Colonic mucosa (tissue), 4 donors: ENCODE measurements at regions of chr7 and their contacts with region 1.

Region 1: GRCh38 chr7:151459726-151460473 is 20.0 kb upstream of the CRYGN start:
- DNase-seq: peak; percentile 83
- H3K4me3 ChIP-seq: no peak overlapping the region
- H3K27ac ChIP-seq: peak overlapping the region; percentile 73
- H3K4me1 ChIP-seq: peaks cover 11% of the 10 kb centered on the region
- H3K27me3 ChIP-seq: no peaks in the 10 kb centered on the region
- CTCF ChIP-seq: no peak

Region 2: DNA sequence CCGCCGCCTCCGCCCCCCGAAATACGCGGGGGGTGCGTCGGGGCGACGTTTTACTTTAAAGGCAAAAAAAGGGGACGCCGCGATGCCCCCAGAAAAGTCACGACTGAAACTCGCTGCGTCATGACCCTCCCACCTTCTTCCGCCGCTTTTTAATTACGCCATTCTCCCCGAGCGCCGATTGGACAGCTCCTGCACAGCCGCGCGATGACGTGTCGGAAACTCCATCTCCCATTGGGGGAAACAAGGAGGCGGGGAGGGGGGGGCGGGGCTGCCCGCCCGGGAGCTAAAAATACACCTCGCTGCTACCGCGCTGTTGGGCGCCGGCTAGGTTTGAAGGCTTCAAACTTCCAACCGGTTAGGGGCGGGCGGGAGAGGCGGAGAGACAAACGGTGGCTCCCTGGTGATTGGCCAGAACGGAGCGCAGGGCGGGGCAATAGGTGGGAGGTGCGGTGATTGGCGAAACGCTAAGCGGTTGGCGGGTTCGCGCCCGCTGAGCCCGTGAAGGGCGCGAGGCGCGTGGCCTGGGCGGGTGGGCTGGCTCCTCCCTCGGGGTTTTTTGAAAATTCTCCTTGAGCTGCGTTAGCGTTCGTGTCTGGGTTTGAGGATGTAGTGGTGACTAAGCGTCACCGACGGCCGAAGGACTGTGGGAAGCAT is 60.0 kb after region 1 on chr7 and contains the start of gene RHEB:
- intact Hi-C with region 1: loop called (anchors 5 kb)
- DNase-seq: peak; percentile 99
- H3K4me3 ChIP-seq: peak within 1 kb of the TSS; percentile 70
- H3K27ac ChIP-seq: peak within 1 kb of the TSS; percentile 98
- H3K4me1 ChIP-seq: peaks cover 3% of the 10 kb centered on the region
- H3K27me3 ChIP-seq: no peaks in the 10 kb centered on the region
- CTCF ChIP-seq: no peak
- total RNA-seq, gene RHEB: 66.8 to 67.6 TPM

Region 3: DNA sequence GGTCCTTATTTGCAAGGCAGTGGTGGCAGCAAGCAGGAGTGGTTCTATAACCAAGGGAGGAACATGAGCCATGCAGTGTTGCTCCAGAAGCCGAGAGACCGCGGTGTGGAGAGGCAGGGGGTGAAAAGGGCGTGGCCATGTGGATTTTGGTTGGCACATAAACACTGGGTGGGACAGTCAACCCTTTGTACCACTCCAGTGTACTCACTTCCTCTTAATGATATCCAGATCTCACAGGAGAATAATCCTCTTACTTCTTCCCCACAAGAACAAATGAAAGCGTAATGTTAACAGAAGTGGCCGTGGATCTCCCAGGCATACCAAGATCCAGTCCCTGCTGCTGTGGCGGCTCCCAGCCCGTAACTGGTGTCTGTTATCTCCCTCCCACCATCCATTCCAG is 1173.6 kb after region 1 on chr7:
- intact Hi-C with region 1: no loop called
- DNase-seq: no peak
- H3K4me3 ChIP-seq: no peak overlapping the region
- H3K27ac ChIP-seq: no peak overlapping the region
- H3K4me1 ChIP-seq: no peaks in the 10 kb centered on the region
- H3K27me3 ChIP-seq: no peaks in the 10 kb centered on the region
- CTCF ChIP-seq: no peak